ENCODE measurements at regions of chr6 and their contacts with region 1.

Region 1: GRCh38 chr6:146543211-146543939 is at the start of gene RAB32:
- DNase-seq: peak; percentile 88 to 90 (median 88)
- ATAC-seq: peak; percentile 99
- H3K4me3 ChIP-seq: peak within 1 kb of the TSS; percentile 47
- H3K27ac ChIP-seq: peak within 1 kb of the TSS; percentile 58; the same call in 1 of the 3 replicates
- H3K4me1 ChIP-seq: peaks cover 2 to 16% of the 10 kb centered on the region in 2 experiments
- H3K27me3 ChIP-seq: no peaks in the 10 kb centered on the region
- CTCF ChIP-seq: peak; percentile 71 to 95 (median 86)
- EP300 ChIP-seq: no peak
- POLR2A ChIP-seq: peak; percentile 53
- RAD21 ChIP-seq: peak; percentile 87
- polyA plus RNA-seq, gene RAB32: 2.5 to 3.8 TPM

Region 2: DNA sequence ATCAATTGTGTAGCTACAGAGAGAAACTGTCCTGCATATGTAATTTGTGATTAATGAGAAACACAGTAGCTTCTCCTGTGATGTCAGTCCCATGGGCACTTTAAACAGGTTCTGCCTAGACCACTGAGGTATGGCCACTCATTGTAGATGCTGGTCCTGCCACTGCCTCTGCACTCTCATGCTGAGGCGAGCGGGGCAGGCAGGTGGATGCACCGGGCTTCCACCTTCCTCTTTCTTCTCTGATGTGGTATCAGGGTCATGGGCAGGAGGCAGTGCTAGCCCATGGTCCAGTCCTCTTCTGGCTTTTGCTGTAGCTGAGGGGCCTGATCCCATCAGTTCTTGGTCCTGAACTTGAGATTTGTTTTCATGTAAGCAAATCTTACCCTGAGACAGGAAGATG is 114.1 kb after region 1 on chr6:
- CTCF ChIA-PET with region 1: no interaction called
- POLR2A ChIA-PET with region 1: no interaction called
- in situ Hi-C with region 1: no loop called
- intact Hi-C with region 1: loop called (anchors 5 kb)
- DNase-seq: no peak
- ATAC-seq: no peak; the same call in 2 of the 3 replicates
- H3K4me3 ChIP-seq: no peak overlapping the region
- H3K27ac ChIP-seq: no peak overlapping the region
- H3K4me1 ChIP-seq: no peaks in the 10 kb centered on the region
- H3K27me3 ChIP-seq: no peaks in the 10 kb centered on the region
- CTCF ChIP-seq: no peak
- EP300 ChIP-seq: no peak
- POLR2A ChIP-seq: no peak
- RAD21 ChIP-seq: no peak

Measured in K562 (cell line).